ENCODE measurements at regions of chr2 and their contacts with region 1.

Region 1: DNA sequence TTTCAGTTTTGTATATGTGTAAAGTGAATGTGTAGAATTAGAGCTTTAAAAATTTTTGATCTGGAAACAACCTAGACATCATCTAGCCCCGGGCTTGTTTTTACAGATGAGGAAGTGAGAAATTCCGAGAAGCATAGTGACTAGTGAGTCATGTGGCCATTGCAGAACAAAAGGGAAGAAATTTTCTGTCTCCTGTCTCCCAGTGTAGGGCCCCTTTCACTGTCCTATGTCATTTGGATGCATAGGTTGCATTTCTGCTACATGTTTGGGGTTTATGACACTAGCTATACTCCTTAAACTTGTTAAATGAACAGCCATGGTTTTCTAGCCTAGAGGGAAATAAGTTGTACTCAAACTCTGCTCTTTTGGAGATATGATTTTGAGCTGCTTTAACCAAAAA is 84.6 kb downstream of the PLCL1 start:
- DNase-seq: peak; percentile 76
- H3K4me3 Mint-ChIP-seq: peak overlapping the region; percentile 21
- H3K27ac Mint-ChIP-seq: peak overlapping the region; percentile 94
- H3K4me1 Mint-ChIP-seq: peaks cover 74% of the 10 kb centered on the region
- H3K27me3 Mint-ChIP-seq: no peaks in the 10 kb centered on the region

Region 2: GRCh38 chr2:197838036-197838435 is 51.0 kb before region 1 on chr2:
- CTCF ChIA-PET with region 1: interaction called, 5 read pairs
- intact Hi-C with region 1: loop called (anchors 1 kb)
- DNase-seq: peak; percentile 48
- H3K4me3 Mint-ChIP-seq: peak overlapping the region; percentile 56
- H3K27ac Mint-ChIP-seq: peak overlapping the region; percentile 63
- H3K4me1 Mint-ChIP-seq: peaks cover 59% of the 10 kb centered on the region
- H3K27me3 Mint-ChIP-seq: no peaks in the 10 kb centered on the region

Region 3: GRCh38 chr2:197873293-197873701 is 15.7 kb before region 1 on chr2:
- CTCF ChIA-PET with region 1: interaction called, 5 read pairs
- intact Hi-C with region 1: loop called (anchors 1 kb)
- DNase-seq: no peak
- H3K4me3 Mint-ChIP-seq: no peak overlapping the region
- H3K27ac Mint-ChIP-seq: no peak overlapping the region
- H3K4me1 Mint-ChIP-seq: peaks cover 65% of the 10 kb centered on the region
- H3K27me3 Mint-ChIP-seq: no peaks in the 10 kb centered on the region

Region 4: DNA sequence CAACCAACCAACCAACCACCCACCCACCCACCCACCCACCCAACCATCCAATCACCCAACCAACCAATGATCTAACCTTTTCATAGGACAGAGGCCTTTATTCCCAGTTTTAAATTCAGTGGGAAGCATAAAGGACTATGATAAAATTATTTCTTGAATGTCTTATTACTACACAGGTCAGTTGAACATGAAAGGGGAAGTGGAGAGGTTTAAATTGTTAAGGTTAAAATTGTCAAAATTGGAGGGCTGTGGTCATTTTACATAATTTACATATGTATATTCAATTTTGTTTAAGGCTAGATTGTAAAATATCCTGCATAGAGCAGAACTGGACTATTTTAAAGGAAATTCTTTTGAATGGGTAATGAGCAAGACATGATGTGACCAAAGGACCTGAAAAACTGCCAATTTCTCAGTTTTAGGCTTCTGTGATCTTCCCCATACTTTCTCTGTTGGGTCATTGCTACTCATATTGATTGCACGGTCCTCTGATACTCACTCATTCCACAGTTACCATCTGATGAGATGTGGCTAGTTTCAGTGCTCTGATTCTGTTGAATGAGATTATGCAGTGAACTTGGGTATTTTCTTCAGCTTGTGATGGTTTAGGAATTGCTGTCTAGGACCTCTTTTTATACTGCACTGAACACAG is 42.7 kb after region 1 on chr2:
- CTCF ChIA-PET with region 1: interaction called, 5 read pairs
- intact Hi-C with region 1: loop called (anchors 5 kb)
- DNase-seq: no peak
- H3K4me3 Mint-ChIP-seq: no peak overlapping the region
- H3K27ac Mint-ChIP-seq: no peak overlapping the region
- H3K4me1 Mint-ChIP-seq: peaks cover 59% of the 10 kb centered on the region
- H3K27me3 Mint-ChIP-seq: no peaks in the 10 kb centered on the region

Region 5: GRCh38 chr2:197952540-197953202 is 63.6 kb after region 1 on chr2:
- CTCF ChIA-PET with region 1: no interaction called
- intact Hi-C with region 1: loop called (anchors 1 kb)
- DNase-seq: peak; percentile 51
- H3K4me3 Mint-ChIP-seq: no peak overlapping the region
- H3K27ac Mint-ChIP-seq: peak overlapping the region; percentile 9
- H3K4me1 Mint-ChIP-seq: peaks cover 79% of the 10 kb centered on the region
- H3K27me3 Mint-ChIP-seq: no peaks in the 10 kb centered on the region

Region 6: DNA sequence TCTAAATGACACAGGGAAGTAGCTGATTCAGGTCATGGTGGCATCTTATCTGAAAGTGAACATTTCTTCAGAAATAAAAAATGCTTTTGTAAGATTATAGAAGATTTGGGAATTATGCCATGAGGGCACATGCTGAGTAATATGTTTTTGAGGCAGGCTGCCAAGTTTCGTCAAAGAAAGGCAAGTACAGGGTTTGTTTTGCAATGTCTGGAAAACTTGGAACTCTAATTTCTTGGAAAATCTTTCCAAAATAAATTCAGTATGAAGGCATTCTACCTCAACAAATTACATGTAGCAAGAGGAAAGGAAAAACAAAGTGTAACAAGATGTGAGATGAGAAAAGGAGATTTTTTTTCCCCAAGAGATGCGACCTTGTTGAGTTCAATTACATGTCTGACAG is 83.0 kb after region 1 on chr2:
- CTCF ChIA-PET with region 1: interaction called, 3 read pairs
- intact Hi-C with region 1: loop called (anchors 1 kb)
- DNase-seq: no peak
- H3K4me3 Mint-ChIP-seq: no peak overlapping the region
- H3K27ac Mint-ChIP-seq: no peak overlapping the region
- H3K4me1 Mint-ChIP-seq: peaks cover 43% of the 10 kb centered on the region
- H3K27me3 Mint-ChIP-seq: no peaks in the 10 kb centered on the region

Region 7: DNA sequence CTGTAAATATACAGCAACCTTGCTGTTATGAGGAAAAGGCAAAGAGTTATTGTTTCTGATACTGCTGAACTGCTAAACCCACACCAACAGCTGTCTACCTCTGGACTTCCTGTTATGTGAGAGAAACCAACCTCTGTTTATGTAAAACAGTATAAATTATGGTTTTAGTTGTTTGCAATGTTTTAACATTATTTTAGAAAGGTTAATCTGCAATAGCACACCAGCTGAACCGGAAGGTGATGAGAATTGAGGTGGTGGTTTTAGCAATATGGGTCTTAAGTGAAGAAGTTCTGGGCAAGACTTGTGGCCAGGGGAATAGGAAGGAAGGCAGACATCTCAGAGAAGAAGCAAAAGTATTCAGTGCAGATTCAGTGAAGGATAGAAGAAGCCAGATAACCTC is 153.1 kb after region 1 on chr2:
- CTCF ChIA-PET with region 1: interaction called, 3 read pairs
- intact Hi-C with region 1: loop called (anchors 1 kb)
- DNase-seq: no peak
- H3K4me3 Mint-ChIP-seq: no peak overlapping the region
- H3K27ac Mint-ChIP-seq: no peak overlapping the region
- H3K4me1 Mint-ChIP-seq: peaks cover 15% of the 10 kb centered on the region
- H3K27me3 Mint-ChIP-seq: no peaks in the 10 kb centered on the region

Region 8: GRCh38 chr2:198309673-198310280 is 420.7 kb after region 1 on chr2:
- CTCF ChIA-PET with region 1: no interaction called
- intact Hi-C with region 1: no loop called
- DNase-seq: peak; percentile 78
- H3K4me3 Mint-ChIP-seq: no peak overlapping the region
- H3K27ac Mint-ChIP-seq: no peak overlapping the region
- H3K4me1 Mint-ChIP-seq: no peaks in the 10 kb centered on the region
- H3K27me3 Mint-ChIP-seq: peaks cover 23% of the 10 kb centered on the region

Measured in activated naive CD4-positive, alpha-beta T cell treated with anti-CD3 and anti-CD28 coated beads for 36 hours (primary cell).